B cell (primary cell): ENCODE measurements at regions of chr1 and their contacts with region 1.

Region 1: GRCh38 chr1:37089750-37090149 is 55.4 kb upstream of the GRIK3 start:
- DNase-seq: no peak
- ATAC-seq: no peak
- H3K4me3 ChIP-seq: no peak overlapping the region
- H3K4me3 Mint-ChIP-seq: no peak overlapping the region
- H3K27ac ChIP-seq: no peak overlapping the region
- H3K27ac Mint-ChIP-seq: no peak overlapping the region
- H3K4me1 ChIP-seq: peaks cover 8 to 18% of the 10 kb centered on the region in 2 donors
- H3K4me1 Mint-ChIP-seq: peaks cover 13% of the 10 kb centered on the region
- H3K27me3 ChIP-seq: peaks cover 0 to 9% (median 2%) of the 10 kb centered on the region in 4 experiments
- H3K27me3 Mint-ChIP-seq: peaks cover 11% of the 10 kb centered on the region
- CTCF ChIP-seq: no peak

Region 2: GRCh38 chr1:37294096-37294495 is 204.3 kb after region 1 on chr1:
- CTCF ChIA-PET with region 1: no interaction called
- POLR2A ChIA-PET with region 1: interaction called, 13 read pairs
- intact Hi-C with region 1: no loop called
- DNase-seq: no peak
- ATAC-seq: no peak
- H3K4me3 ChIP-seq: no peak overlapping the region
- H3K4me3 Mint-ChIP-seq: peak overlapping the region; percentile 4
- H3K27ac ChIP-seq: no peak overlapping the region
- H3K27ac Mint-ChIP-seq: peak overlapping the region; percentile 4
- H3K4me1 ChIP-seq: peaks cover 40 to 51% of the 10 kb centered on the region in 2 donors
- H3K4me1 Mint-ChIP-seq: peaks cover 50% of the 10 kb centered on the region
- H3K27me3 ChIP-seq: peaks cover 0 to 14% (median 3%) of the 10 kb centered on the region in 4 experiments
- H3K27me3 Mint-ChIP-seq: peaks cover 22% of the 10 kb centered on the region
- CTCF ChIP-seq: no peak